ENCODE measurements at regions of chr3 and their contacts with region 1.

Region 1: GRCh38 chr3:66393333-66394005 is 107.4 kb downstream of the LRIG1 start:
- DNase-seq: no peak
- ATAC-seq: no peak
- H3K4me3 ChIP-seq: no peak overlapping the region
- H3K27ac ChIP-seq: no peak overlapping the region
- H3K4me1 ChIP-seq: no peaks in the 10 kb centered on the region
- H3K27me3 ChIP-seq: no peaks in the 10 kb centered on the region
- CTCF ChIP-seq: no peak

Region 2: GRCh38 chr3:66456711-66457173 is 63.3 kb after region 1 on chr3:
- CTCF ChIA-PET with region 1: no interaction called
- POLR2A ChIA-PET with region 1: interaction called, 11 read pairs
- in situ Hi-C with region 1: no loop called
- intact Hi-C with region 1: no loop called
- DNase-seq: no peak
- ATAC-seq: no peak
- H3K4me3 ChIP-seq: no peak overlapping the region
- H3K27ac ChIP-seq: no peak overlapping the region
- H3K4me1 ChIP-seq: no peaks in the 10 kb centered on the region
- H3K27me3 ChIP-seq: no peaks in the 10 kb centered on the region
- CTCF ChIP-seq: no peak